ENCODE measurements at regions of chr1 and their contacts with region 1.

Region 1: DNA sequence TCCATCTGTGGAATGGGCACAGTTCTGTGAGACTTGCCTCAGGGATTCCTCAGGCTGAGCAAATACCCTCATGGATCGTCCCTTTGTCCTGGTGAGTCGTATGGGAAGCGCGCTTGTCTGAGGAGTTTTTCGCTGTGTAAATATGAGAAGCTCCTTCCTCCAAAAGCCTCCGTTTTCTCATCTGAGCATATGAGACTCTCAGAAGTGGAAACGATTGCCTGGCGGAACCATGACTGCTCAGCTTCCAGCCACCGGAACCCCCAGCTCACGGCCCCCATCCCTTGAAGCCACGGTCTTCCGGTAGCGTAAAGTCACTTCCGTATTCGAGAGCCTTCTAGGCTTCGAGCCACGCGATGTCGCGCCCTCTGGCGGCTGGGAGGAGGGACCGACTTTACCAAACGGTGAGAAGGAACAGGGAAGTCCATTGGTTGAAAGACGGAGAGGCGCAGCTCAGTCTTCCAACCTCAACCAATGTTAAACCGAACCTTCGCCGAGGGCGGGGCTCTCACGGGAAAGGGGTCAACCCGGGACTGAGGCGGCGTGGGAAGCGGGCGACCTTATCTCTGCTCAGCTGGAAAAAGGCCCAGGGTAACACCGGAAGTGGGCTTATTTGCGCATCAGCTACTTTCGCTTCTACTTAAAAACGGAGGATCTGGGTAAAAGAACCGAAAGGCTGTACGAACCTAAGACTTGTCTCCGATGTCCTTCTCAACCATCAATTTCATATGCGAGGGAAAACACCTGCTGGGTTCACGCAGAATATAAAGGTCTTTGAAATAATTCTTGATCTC is 46.2 kb downstream of the AZIN2 start:
- DNase-seq: peak; percentile 98 to 99 (median 99)
- ATAC-seq: peak; percentile 98 to 99 (median 98)
- H3K4me3 ChIP-seq: peak overlapping the region; percentile 30 to 93 (median 76)
- H3K27ac ChIP-seq: peak overlapping the region; percentile 72 to 92 (median 84)
- H3K4me1 ChIP-seq: peaks cover 2 to 28% (median 18%) of the 10 kb centered on the region in 12 donors
- H3K27me3 ChIP-seq: no peaks in the 10 kb centered on the region
- CTCF ChIP-seq: peak; percentile 83 to 99 (median 93)
- POLR2A ChIP-seq: peak in 1 of 2 donors; percentile 64

Region 2: GRCh38 chr1:33094971-33095604 is 32.1 kb before region 1 on chr1:
- intact Hi-C with region 1: no loop called
- DNase-seq: peak in 2 of 5 donors; percentile 43 to 45
- ATAC-seq: peak in 1 of 4 donors; percentile 34
- H3K4me3 ChIP-seq: no peak overlapping the region
- H3K27ac ChIP-seq: no peak overlapping the region
- H3K4me1 ChIP-seq: peaks cover 0 to 45% (median 6%) of the 10 kb centered on the region in 12 donors
- H3K27me3 ChIP-seq: no peaks in the 10 kb centered on the region
- CTCF ChIP-seq: peak; percentile 93 to 99 (median 98)
- POLR2A ChIP-seq: no peak

Region 3: GRCh38 chr1:33152685-33153432 is 25.7 kb after region 1 on chr1:
- intact Hi-C with region 1: loop called in 1 of 10 experiments (anchors 1 kb)
- DNase-seq: peak; percentile 89 to 94 (median 90)
- ATAC-seq: peak; percentile 91 to 97 (median 94)
- H3K4me3 ChIP-seq: no peak overlapping the region
- H3K27ac ChIP-seq: peak overlapping the region in 11 of 12 donors; percentile 37 to 85 (median 77)
- H3K4me1 ChIP-seq: peaks cover 12 to 48% (median 35%) of the 10 kb centered on the region in 12 donors
- H3K27me3 ChIP-seq: no peaks in the 10 kb centered on the region
- CTCF ChIP-seq: no peak
- POLR2A ChIP-seq: no peak

Region 4: GRCh38 chr1:33169290-33170055 is 42.3 kb after region 1 on chr1:
- intact Hi-C with region 1: no loop called
- DNase-seq: no peak
- ATAC-seq: peak; percentile 9 to 39 (median 18)
- H3K4me3 ChIP-seq: no peak overlapping the region
- H3K27ac ChIP-seq: peak overlapping the region in 2 of 12 donors; percentile 31 to 35
- H3K4me1 ChIP-seq: peaks cover 0 to 31% (median 17%) of the 10 kb centered on the region in 12 donors
- H3K27me3 ChIP-seq: no peaks in the 10 kb centered on the region
- CTCF ChIP-seq: no peak
- POLR2A ChIP-seq: no peak

Region 5: DNA sequence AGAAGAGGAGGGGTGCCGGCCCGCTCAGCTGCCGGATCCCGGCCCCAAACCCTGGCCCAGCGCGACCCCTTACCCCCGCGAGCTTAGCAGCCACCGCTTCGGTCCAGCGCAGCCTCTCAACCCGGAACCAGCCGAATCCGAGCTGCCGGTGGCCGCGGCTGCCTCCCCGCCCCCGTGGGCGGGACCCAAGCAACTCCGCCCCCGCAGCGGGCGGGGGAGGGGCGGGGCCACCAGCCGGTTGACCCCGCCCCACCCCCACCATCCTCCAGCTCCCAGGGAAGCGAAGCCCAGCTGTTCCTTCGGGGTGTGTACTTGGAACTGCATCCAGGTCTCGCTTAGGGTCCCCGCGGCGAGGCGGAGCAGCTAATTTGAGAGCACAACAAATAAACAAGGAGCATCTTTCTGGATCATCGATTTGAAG is 54.7 kb after region 1 on chr1 and contains the start of gene TRIM62:
- intact Hi-C with region 1: loop called in 6 of 10 experiments (anchors 1 to 5 kb)
- DNase-seq: peak; percentile 90 to 94 (median 92)
- ATAC-seq: peak; percentile 78 to 92 (median 90)
- H3K4me3 ChIP-seq: peak within 1 kb of the TSS; percentile 59 to 93 (median 85)
- H3K27ac ChIP-seq: peak within 1 kb of the TSS; percentile 29 to 89 (median 76)
- H3K4me1 ChIP-seq: peaks cover 0 to 26% (median 9%) of the 10 kb centered on the region in 12 donors
- H3K27me3 ChIP-seq: peaks cover 0 to 4% (median 0%) of the 10 kb centered on the region in 9 donors
- CTCF ChIP-seq: no peak
- POLR2A ChIP-seq: peak in 1 of 2 donors; percentile 57
- total RNA-seq, gene TRIM62: 1.9 to 6.1 (median 3.3) TPM

Region 6: DNA sequence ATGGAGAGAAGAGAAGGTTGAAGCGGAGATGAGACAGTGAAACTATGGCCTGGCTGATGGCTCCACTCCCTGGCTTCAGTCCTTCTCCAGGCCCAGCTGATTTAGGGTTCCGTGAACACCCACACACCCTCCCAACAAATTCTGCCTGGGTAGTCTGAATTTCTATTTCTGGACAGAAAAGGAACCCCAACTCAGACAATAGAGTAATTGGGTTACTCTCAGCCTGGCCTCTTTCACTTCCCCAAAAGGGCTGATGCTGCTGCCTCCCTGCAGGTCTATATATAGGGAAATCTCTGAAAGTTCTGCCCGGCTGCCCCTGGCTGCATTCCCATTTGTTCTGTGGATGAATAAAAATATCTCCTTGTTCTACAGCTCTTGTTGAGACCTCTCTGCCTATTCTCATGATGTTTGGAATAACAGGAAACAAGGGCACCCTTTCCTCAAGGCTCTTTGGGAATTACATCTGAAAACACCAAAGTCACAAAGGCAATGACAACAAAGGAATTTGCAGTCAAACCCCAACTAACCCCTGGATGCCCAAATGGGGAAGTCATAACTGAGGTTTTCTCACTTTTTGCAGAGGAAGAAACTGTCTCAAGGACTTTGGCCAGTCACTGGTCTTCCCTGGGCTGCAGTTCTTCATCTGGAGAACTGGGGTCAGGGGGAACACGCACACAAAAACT is 333.9 kb after region 1 on chr1:
- intact Hi-C with region 1: loop called in 2 of 10 experiments (anchors 10 kb)
- DNase-seq: peak in 4 of 5 donors; percentile 63 to 80 (median 74)
- ATAC-seq: peak; percentile 75 to 81 (median 78)
- H3K4me3 ChIP-seq: peak overlapping the region in 2 of 12 donors; percentile 23 to 25
- H3K27ac ChIP-seq: peak overlapping the region; percentile 68 to 95 (median 86)
- H3K4me1 ChIP-seq: peaks cover 0 to 68% (median 33%) of the 10 kb centered on the region in 12 donors
- H3K27me3 ChIP-seq: no peaks in the 10 kb centered on the region
- CTCF ChIP-seq: no peak
- POLR2A ChIP-seq: no peak

Measured in heart left ventricle (tissue), 16 donors.